A549 (cell line): ENCODE measurements at regions of chr7 and their contacts with region 1.

Region 1: GRCh38 chr7:100132697-100133151 is 6.0 kb downstream of the MBLAC1 start:
- DNase-seq: peak; percentile 74 to 86
- ATAC-seq: peak; percentile 92
- H3K4me3 ChIP-seq: no peak overlapping the region
- H3K27ac ChIP-seq: no peak overlapping the region
- H3K4me1 ChIP-seq: peaks cover 13% of the 10 kb centered on the region; the same call in 1 of the 3 replicates
- CTCF ChIP-seq: peak; percentile 87
- EP300 ChIP-seq: no peak
- POLR2A ChIP-seq: no peak
- RAD21 ChIP-seq: peak; percentile 90 to 96

Region 2: DNA sequence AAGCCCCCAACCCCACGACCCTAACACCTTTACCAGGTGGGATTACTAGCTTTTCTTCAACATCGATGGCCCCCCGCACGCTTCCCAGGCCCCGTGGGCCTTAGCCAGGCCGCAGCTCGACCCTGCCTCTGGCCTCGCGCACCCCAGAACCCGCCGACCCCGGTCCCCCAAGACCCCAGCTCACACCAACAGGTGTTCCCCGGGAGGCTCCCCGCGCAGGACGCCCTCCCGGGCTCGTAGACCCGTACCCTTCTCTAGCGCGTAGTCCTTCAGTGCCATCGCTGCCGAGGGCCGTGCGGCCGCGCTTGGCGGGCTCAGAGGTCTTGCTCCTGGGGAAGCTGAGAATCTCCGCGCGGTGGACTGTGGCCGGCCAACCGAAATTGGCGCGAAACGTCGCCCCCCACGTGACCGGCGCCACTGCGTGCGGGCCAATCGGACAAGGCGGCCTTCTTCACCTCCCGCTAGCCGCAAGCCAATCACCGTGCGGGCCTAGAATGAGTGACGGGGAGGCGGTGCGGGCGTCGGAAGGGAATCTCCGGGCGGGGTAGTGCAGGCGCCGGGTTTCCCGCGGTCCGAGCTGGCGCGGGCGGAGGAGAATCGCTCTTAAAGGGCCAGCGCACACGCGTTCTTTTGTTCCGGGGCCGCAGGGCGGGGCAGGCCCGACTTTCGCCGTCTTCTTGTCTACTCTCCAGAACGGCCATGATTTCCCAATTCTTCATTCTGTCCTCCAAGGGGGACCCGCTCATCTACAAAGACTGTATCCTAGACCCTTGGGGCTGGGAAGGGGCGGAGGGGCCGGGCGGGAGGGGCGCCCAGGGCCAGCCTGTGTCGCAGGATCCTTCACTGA is 31.5 kb before region 1 on chr7 and contains the starts of genes AP4M1 and MCM7:
- CTCF ChIA-PET with region 1: interaction called, 33 read pairs
- POLR2A ChIA-PET with region 1: interaction called, 8 read pairs
- DNase-seq: peak; percentile 97 to 100
- ATAC-seq: peak; percentile 89 to 91
- H3K4me3 ChIP-seq: peak within 1 kb of the TSS; percentile 98
- H3K27ac ChIP-seq: peak within 1 kb of the TSS; percentile 94 to 100
- H3K4me1 ChIP-seq: peaks cover 18% of the 10 kb centered on the region
- CTCF ChIP-seq: no peak
- EP300 ChIP-seq: no peak
- POLR2A ChIP-seq: no peak
- RAD21 ChIP-seq: no peak
- polyA plus RNA-seq, gene AP4M1: 13.7 and 16.6 TPM in 2 replicates
- polyA plus RNA-seq, gene MCM7: 138 and 145 TPM in 2 replicates

Region 3: GRCh38 chr7:100148559-100149350 is 16.0 kb after region 1 on chr7 and contains the start of gene LAMTOR4:
- CTCF ChIA-PET with region 1: interaction called, 245 read pairs
- POLR2A ChIA-PET with region 1: interaction called, 16 read pairs
- DNase-seq: peak; percentile 99 to 100
- ATAC-seq: peak; percentile 99
- H3K4me3 ChIP-seq: peak within 1 kb of the TSS; percentile 81
- H3K27ac ChIP-seq: peak within 1 kb of the TSS; percentile 93 to 94
- H3K4me1 ChIP-seq: peaks cover 14% of the 10 kb centered on the region
- CTCF ChIP-seq: no peak
- EP300 ChIP-seq: no peak
- POLR2A ChIP-seq: peak; percentile 82
- RAD21 ChIP-seq: no peak
- polyA plus RNA-seq, gene LAMTOR4: 123 and 152 TPM in 2 replicates

Region 4: GRCh38 chr7:100190048-100190711 is 57.5 kb after region 1 on chr7:
- CTCF ChIA-PET with region 1: interaction called, 14 read pairs
- POLR2A ChIA-PET with region 1: no interaction called
- DNase-seq: peak; percentile 58 to 60
- ATAC-seq: peak; percentile 84 to 89
- H3K4me3 ChIP-seq: no peak overlapping the region
- H3K27ac ChIP-seq: peak overlapping the region; percentile 62 to 63; a peak in 3 of 6 replicates
- H3K4me1 ChIP-seq: peaks cover 4% of the 10 kb centered on the region; the same call in 2 of the 3 replicates
- CTCF ChIP-seq: peak; percentile 63
- EP300 ChIP-seq: no peak
- POLR2A ChIP-seq: no peak
- RAD21 ChIP-seq: peak; percentile 54 to 62; a peak in 4 of 5 replicates

Region 5: GRCh38 chr7:100208911-100209408 is 76.2 kb after region 1 on chr7:
- CTCF ChIA-PET with region 1: interaction called, 58 read pairs
- POLR2A ChIA-PET with region 1: interaction called, 6 read pairs
- DNase-seq: no peak
- ATAC-seq: no peak
- H3K4me3 ChIP-seq: no peak overlapping the region
- H3K27ac ChIP-seq: no peak overlapping the region
- H3K4me1 ChIP-seq: no peaks in the 10 kb centered on the region
- CTCF ChIP-seq: no peak
- EP300 ChIP-seq: no peak
- POLR2A ChIP-seq: no peak
- RAD21 ChIP-seq: no peak

Region 6: DNA sequence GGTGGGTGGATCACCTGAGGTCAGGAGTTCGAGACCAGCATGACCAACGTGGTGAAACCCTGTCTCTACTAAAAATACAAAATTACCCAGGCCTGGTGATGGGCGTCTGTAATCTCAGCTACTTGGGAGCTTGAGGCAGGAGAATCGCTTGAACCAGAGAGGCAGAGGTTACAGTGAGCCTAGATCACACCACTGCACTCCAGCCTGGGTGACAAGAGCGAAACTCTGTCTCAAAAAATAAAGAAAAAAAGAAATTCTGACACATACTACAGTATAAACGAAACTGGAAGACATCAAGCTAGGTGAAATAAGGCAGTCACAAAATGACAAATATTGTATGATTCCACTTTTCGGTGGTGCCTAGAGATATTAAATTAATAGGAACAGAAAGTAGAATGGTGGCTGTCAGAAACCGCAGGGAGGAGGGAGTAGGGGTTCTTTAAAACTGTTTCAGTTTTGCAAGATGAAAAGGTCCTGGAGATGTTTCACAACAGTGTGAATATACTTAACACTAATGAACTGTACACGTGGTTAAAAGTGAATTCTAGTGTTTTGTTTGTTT is 263.8 kb after region 1 on chr7:
- CTCF ChIA-PET with region 1: interaction called, 16 read pairs
- POLR2A ChIA-PET with region 1: no interaction called
- DNase-seq: no peak
- ATAC-seq: no peak
- H3K4me3 ChIP-seq: no peak overlapping the region
- H3K27ac ChIP-seq: no peak overlapping the region
- H3K4me1 ChIP-seq: no peaks in the 10 kb centered on the region
- CTCF ChIP-seq: no peak
- EP300 ChIP-seq: no peak
- POLR2A ChIP-seq: no peak
- RAD21 ChIP-seq: no peak